Testis (tissue), 5 donors: ENCODE measurements at regions of chr14 and their contacts with region 1.

Region 1: GRCh38 chr14:32121948-32122347 is 44.8 kb downstream of the ARHGAP5 start:
- DNase-seq: no peak
- H3K4me3 ChIP-seq: no peak overlapping the region
- H3K27ac ChIP-seq: no peak overlapping the region
- H3K4me1 ChIP-seq: no peaks in the 10 kb centered on the region
- H3K27me3 ChIP-seq: no peaks in the 10 kb centered on the region
- CTCF ChIP-seq: no peak
- POLR2A ChIP-seq: no peak

Region 2: GRCh38 chr14:31582286-31582691 is 539.7 kb before region 1 on chr14:
- intact Hi-C with region 1: no loop called
- DNase-seq: peak; percentile 36
- H3K4me3 ChIP-seq: no peak overlapping the region
- H3K27ac ChIP-seq: no peak overlapping the region
- H3K4me1 ChIP-seq: peaks cover 6% of the 10 kb centered on the region
- H3K27me3 ChIP-seq: no peaks in the 10 kb centered on the region
- CTCF ChIP-seq: no peak
- POLR2A ChIP-seq: no peak

Region 3: GRCh38 chr14:32102152-32102787 is 19.7 kb before region 1 on chr14:
- intact Hi-C with region 1: loop called (anchors 2 kb)
- DNase-seq: no peak
- H3K4me3 ChIP-seq: no peak overlapping the region
- H3K27ac ChIP-seq: no peak overlapping the region
- H3K4me1 ChIP-seq: no peaks in the 10 kb centered on the region
- H3K27me3 ChIP-seq: no peaks in the 10 kb centered on the region
- CTCF ChIP-seq: no peak
- POLR2A ChIP-seq: no peak